Posterior vena cava (tissue), 2 donors: ENCODE measurements at regions of chr4 and their contacts with region 1.

Region 1: GRCh38 chr4:20062054-20062453 is 189.7 kb upstream of the SLIT2 start:
- DNase-seq: no peak

Region 2: GRCh38 chr4:20572976-20573375 is 510.9 kb after region 1 on chr4:
- intact Hi-C with region 1: loop called in 1 of 2 experiments (anchors 5 kb)
- DNase-seq: no peak